Esophagus muscularis mucosa (tissue), 4 donors: ENCODE measurements at regions of chr10 and their contacts with region 1.

Region 1: GRCh38 chr10:99732033-99732912 is at the starts of genes COX15 and CUTC:
- DNase-seq: peak; percentile 99
- H3K4me3 ChIP-seq: peak within 1 kb of the TSS; percentile 78 to 84 (median 80)
- H3K27ac ChIP-seq: peak within 1 kb of the TSS; percentile 87 to 96 (median 92)
- H3K4me1 ChIP-seq: peaks cover 23 to 42% (median 36%) of the 10 kb centered on the region in 4 donors
- H3K27me3 ChIP-seq: no peaks in the 10 kb centered on the region
- CTCF ChIP-seq: peak; percentile 11 to 40 (median 25)
- EP300 ChIP-seq: no peak
- POLR2A ChIP-seq: peak; percentile 86
- total RNA-seq, gene COX15: 21.0 to 30.5 (median 24.1) TPM
- total RNA-seq, gene CUTC: 17.6 to 28.7 (median 24.1) TPM

Region 2: DNA sequence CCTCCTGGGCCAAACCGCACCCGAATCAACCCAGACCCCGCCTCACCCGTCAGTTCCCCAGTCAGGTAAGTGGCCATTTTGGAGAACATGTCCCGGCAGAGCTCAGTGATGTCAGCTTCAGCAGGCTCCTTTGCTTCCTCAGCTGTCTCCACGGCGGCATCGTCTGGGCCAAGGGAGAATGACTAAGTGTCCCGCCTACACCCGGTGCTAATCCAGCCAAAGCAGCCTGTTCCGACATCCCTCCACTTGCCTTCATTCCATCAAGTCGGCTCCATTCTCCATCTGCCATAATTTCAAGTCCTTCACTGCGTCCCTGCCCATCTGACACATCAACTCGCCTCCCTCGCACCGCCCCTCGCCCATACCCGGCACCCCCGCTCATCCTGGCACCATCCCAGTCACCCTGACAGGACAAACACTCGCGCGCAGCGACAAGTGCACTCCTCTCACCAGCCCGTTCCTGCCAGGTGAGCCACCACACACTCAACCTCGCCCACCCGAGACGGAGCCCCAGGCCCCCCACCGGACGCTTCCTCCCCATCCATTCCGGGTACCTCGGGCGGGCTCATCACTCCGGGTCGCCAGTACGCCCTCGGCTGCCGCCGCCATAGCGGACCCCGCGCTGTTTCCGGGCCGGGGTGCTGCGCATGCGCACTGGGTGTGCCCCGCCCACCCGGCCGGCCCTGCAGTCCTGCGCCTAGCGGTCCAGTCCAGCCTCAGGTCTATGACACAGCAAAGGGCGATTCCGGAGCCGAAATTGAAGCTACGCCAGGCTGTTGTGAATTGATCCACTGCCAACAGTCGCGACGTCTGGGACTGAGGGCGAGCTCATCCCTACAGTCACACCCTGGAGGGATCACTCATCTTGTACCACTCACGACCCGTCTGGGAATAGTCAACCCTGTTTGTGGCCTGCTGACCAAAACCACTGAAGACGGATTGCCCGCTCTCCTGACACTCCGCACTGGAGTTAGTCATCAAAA is 554.1 kb after region 1 on chr10 and contains the start of gene BLOC1S2:
- intact Hi-C with region 1: loop called (anchors 5 kb)
- DNase-seq: peak; percentile 96
- H3K4me3 ChIP-seq: peak within 1 kb of the TSS; percentile 72 to 92 (median 81)
- H3K27ac ChIP-seq: peak within 1 kb of the TSS; percentile 88 to 98 (median 93)
- H3K4me1 ChIP-seq: peaks cover 25 to 50% (median 42%) of the 10 kb centered on the region in 4 donors
- H3K27me3 ChIP-seq: no peaks in the 10 kb centered on the region
- CTCF ChIP-seq: peak in 2 of 3 experiments; percentile 20 to 37
- EP300 ChIP-seq: no peak
- POLR2A ChIP-seq: peak; percentile 79
- total RNA-seq, gene BLOC1S2: 11.2 to 23.4 (median 17.5) TPM